ENCODE measurements at regions of chr16 and their contacts with region 1.

Region 1: GRCh38 chr16:85759631-85760419 is 8.9 kb upstream of the C16orf74 start:
- DNase-seq: peak; percentile 41 to 55
- ATAC-seq: peak; percentile 81 to 93; a peak in 5 of 6 replicates
- H3K4me3 ChIP-seq: no peak overlapping the region
- H3K27ac ChIP-seq: no peak overlapping the region
- H3K4me1 ChIP-seq: no peaks in the 10 kb centered on the region
- CTCF ChIP-seq: peak; percentile 49
- EP300 ChIP-seq: no peak
- POLR2A ChIP-seq: no peak
- RAD21 ChIP-seq: peak; percentile 58 to 70

Region 2: DNA sequence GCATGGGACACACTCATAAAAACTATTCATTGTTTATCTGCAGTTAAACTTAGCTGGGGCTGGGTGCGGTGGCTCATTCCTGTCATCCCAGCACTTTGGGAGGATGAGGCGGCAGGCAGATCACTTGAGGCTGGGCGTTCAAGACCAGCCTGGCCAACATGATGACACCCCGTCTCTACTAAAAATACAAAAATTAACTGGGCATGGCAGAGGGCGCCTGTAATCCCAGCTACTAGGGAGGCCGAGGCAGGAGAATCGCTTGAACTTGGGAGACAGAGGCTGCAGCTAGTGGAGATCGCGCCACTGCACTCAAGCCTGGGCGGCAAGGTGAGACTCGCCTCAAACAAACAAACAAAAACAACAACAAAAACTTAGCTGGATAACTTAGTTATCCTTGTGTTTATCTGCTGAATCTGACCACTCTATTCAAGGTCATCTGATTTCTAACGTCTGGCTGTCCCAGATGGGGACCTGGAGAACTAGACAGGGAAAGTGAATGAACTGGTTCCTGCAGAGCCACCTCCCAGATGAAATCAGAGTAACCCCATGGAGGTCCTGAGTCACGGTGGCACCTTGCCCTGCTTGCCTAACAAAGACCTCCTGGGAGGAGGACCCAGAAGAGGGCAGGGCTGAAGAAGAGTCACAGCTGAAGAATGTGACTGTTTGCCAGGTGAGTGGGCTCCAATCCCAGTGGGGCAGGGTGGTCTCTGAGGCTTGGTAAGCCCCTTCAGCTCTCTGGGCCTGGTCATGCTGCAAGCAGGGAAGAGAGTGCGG is 13.6 kb before region 1 on chr16:
- CTCF ChIA-PET with region 1: interaction called, 16 read pairs
- POLR2A ChIA-PET with region 1: no interaction called
- DNase-seq: peak; percentile 51 to 59
- ATAC-seq: peak; percentile 40 to 48; a peak in 4 of 6 replicates
- H3K4me3 ChIP-seq: no peak overlapping the region
- H3K27ac ChIP-seq: peak overlapping the region; percentile 21 to 81
- H3K4me1 ChIP-seq: peaks cover 26% of the 10 kb centered on the region
- CTCF ChIP-seq: no peak
- EP300 ChIP-seq: no peak
- POLR2A ChIP-seq: no peak
- RAD21 ChIP-seq: no peak

Region 3: GRCh38 chr16:85770741-85771140 is 10.9 kb after region 1 on chr16:
- CTCF ChIA-PET with region 1: interaction called, 14 read pairs
- POLR2A ChIA-PET with region 1: no interaction called
- DNase-seq: no peak
- ATAC-seq: no peak
- H3K4me3 ChIP-seq: no peak overlapping the region
- H3K27ac ChIP-seq: no peak overlapping the region
- H3K4me1 ChIP-seq: peaks cover 17% of the 10 kb centered on the region
- CTCF ChIP-seq: no peak
- EP300 ChIP-seq: no peak
- POLR2A ChIP-seq: no peak
- RAD21 ChIP-seq: no peak